ENCODE measurements at regions of chr6 and their contacts with region 1.

Region 1: DNA sequence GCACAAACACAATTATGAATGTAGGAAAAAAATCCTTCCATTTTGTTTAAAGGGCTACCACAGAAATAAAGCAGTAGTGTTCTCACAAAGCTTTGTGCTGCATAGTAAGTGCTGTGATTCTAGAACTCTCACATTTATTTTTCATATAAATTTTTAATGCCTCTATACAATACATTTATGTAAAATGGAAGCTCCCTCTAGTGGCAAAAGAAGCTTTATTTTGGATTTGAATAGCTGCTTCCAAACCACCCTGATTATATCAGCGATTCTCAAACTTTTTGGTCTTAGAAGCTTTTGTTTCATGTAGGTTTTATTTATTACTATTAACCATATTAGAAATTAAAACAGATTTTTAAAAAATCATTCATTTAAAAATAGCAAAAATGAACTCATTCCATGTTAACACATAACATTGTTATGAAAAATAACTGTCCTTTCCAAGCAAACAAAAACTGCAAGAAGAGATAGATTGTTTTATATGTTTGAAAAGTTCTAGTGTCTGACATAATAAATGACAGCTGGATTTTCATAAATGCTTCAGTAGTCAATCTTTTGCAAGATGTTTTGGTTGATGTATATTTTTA is 38.4 kb downstream of the HS3ST5 start:
- DNase-seq: no peak
- CTCF ChIP-seq: peak; percentile 45

Region 2: GRCh38 chr6:114288701-114289495 is 15.5 kb before region 1 on chr6:
- CTCF ChIA-PET with region 1: interaction called, 25 read pairs
- POLR2A ChIA-PET with region 1: no interaction called
- DNase-seq: no peak
- CTCF ChIP-seq: no peak

Region 3: GRCh38 chr6:114520976-114521375 is 216.6 kb after region 1 on chr6:
- CTCF ChIA-PET with region 1: no interaction called
- POLR2A ChIA-PET with region 1: no interaction called
- DNase-seq: no peak
- CTCF ChIP-seq: no peak

Measured in GM10248 (cell line).